ENCODE measurements at regions of chr11 and their contacts with region 1.

Region 1: DNA sequence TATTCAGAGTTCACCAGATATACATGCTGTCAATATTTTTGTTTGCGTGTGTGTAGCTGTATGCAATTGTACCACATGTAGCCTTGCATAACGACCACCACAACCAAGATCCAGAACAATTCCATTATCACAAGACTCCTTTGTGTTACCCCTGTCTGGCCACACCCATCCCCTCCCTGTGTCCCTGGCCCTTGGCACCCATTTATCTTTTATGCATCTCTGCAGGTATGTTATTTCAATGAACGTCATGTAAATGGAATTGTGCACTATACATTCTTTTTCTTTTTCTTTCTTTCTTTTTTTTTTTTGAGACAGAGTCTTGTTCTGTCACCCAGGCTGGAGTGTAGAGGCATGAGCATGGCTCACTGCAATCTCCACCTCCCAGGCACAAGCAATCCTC is 9.7 kb upstream of the PAFAH1B2 start:
- DNase-seq: no peak

Region 2: GRCh38 chr11:117205211-117205818 is 70.9 kb after region 1 on chr11:
- in situ Hi-C with region 1: loop called (anchors 5 kb)
- DNase-seq: no peak

Region 3: DNA sequence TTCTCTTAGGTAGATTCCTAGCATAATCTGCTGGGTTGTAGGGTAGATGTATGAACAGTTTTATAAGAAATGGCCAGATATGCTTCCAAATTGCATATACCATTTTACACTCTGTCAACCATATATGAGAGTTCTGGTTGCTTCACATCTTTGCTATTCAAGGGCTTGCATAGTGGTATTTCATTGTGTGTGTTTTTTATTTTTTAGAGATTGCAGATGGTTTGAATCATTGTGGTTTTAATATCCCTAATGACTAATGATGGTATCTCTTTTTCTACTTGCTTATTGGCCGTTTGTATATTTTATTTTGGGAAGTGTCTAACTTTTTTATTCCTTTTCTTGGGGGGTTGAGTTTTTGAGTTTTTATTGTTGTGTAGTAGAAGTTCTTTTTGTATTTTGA is 125.0 kb after region 1 on chr11:
- in situ Hi-C with region 1: no loop called
- DNase-seq: no peak

Region 4: DNA sequence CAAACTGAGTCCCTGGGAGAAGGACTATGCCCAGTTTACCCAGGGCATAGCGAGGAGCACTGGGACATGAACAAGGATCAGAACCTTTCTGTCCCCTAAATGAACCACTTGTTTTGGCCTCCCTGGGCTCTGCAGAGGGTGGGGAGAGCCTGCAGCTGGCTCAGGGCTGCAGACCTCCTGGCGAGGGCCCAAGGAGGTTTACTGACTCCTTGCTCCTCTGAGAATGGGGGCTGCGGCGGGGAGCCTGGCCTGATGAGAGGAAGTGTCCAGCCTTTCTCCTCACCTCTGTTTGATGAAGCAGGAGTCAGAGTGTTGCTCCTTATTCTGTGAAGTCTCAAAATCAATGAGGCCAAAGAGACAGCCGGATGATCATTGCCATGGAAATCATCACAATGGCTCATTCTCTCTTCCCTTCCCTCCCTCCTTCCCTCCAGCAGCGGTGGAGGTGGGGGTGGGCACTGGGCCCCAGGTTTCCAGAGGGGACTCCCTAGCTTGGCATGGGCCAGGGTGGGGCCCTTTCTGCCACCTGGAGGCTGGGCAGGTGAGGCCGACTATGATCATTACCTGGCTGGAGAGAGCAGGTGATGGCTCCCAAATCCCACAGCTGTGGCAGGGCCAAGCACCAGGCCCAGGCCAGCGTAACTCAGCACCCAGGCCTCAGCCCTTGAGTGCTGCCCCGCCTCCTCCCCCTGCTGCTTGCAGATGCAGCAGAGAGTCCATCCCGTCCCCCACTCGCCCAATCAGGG is 362.9 kb after region 1 on chr11:
- in situ Hi-C with region 1: no loop called
- DNase-seq: no peak